ENCODE measurements at regions of chr2 and their contacts with region 1.

Region 1: DNA sequence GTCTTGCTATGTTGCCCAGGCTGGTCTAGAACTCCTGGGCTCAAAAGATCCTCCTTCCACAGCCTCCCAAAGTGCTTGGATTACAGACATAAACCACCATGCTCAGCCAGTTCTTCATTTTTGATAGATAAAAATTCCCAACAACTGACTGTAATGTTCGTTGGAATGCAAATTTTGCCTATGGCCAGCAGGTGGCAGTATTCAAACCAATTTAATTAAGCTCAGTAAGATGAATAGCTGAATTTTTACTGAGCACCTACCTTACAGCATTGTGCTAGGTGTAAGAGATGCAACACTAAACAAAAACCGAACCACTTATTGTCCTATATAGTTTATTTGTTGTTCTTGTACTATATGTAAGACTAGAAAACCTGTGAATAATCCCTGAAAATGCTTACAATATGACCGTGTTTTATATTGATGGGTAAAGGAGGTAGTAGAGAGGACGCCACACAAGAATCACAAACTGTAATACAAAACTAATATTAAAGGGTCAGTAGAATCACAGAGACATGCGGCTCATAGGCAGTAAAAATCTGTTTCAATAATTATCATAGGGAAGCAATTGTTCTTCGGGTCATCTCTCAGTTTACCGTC is 8.2 kb upstream of the TMEM182 start:
- DNase-seq: peak; percentile 25
- H3K4me3 Mint-ChIP-seq: no peak overlapping the region
- H3K27ac Mint-ChIP-seq: no peak overlapping the region
- H3K4me1 Mint-ChIP-seq: no peaks in the 10 kb centered on the region
- H3K27me3 Mint-ChIP-seq: no peaks in the 10 kb centered on the region
- CTCF ChIP-seq: peak; percentile 73

Region 2: DNA sequence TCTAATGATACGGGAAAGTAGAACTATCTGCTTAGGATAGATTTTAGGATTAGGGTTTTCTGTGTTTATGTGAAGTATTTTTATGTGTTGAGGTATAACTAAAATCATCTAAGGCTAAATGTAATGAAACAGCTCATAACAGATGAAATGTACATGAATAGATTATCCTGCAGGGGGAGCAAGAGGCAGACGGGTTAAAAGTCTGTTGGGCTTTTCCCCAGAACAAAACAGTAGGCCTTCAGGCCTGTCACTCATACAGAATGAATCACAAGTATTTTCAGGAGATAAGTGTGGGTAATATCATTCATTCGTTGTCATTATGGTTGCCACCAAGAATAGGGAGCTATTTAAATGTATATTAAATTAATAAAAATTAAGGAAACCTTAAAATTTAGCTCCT is 869.8 kb before region 1 on chr2:
- CTCF ChIA-PET with region 1: no interaction called
- intact Hi-C with region 1: no loop called
- DNase-seq: peak; percentile 28
- H3K4me3 Mint-ChIP-seq: no peak overlapping the region
- H3K27ac Mint-ChIP-seq: no peak overlapping the region
- H3K4me1 Mint-ChIP-seq: no peaks in the 10 kb centered on the region
- H3K27me3 Mint-ChIP-seq: no peaks in the 10 kb centered on the region
- CTCF ChIP-seq: peak; percentile 44

Region 3: DNA sequence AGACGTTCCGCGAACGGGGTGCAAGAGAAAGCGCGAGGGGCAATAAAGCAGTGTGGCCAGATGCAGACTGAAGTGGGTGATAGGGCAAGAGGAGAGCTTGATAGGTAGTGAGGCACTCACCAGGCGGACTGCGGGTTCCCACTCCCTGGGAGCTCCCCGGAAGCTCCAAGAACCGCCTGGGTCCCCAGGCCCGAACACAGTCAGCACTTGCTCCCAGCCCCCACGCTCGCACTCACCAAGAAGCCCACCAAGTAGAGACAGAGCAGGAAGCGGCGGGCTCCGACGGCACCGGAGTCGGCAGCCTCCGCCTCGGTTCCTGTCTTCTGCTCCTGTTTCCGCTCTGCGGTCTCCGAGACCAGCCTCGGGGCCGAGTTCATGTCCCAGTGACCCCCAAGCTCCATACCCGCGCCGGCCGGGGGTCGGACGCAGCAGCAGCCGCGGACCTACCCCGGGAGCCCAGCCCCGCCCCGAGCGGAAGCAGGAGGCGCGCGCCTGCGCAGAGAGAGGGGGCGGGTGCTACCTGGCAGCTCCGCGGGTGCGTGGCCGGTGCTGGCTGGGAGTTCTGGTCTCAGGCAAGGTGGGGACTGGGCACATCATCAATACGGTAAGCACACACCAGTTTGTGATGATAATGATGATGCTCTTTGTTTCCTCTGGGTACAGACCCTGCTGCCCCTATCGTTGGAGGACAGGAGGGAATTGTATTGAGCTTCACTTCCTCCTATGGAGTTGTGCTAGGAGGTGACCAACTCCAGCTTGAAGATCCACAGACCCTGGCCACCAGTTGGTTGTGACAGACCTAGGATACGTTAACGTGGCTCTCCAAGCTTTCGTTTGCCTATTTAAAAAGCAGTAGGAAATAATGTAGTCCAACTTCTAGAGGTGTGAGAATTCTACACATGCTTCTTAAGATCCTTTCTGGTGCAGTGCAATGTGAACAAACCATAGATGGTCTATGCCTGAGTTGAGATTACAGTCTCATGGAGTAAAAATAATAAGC is 17.0 kb before region 1 on chr2:
- CTCF ChIA-PET with region 1: interaction called, 11 read pairs
- intact Hi-C with region 1: no loop called
- DNase-seq: peak; percentile 89
- H3K4me3 Mint-ChIP-seq: peak overlapping the region; percentile 99
- H3K27ac Mint-ChIP-seq: peak overlapping the region; percentile 75
- H3K4me1 Mint-ChIP-seq: peaks cover 9% of the 10 kb centered on the region
- H3K27me3 Mint-ChIP-seq: no peaks in the 10 kb centered on the region
- CTCF ChIP-seq: no peak

Region 4: DNA sequence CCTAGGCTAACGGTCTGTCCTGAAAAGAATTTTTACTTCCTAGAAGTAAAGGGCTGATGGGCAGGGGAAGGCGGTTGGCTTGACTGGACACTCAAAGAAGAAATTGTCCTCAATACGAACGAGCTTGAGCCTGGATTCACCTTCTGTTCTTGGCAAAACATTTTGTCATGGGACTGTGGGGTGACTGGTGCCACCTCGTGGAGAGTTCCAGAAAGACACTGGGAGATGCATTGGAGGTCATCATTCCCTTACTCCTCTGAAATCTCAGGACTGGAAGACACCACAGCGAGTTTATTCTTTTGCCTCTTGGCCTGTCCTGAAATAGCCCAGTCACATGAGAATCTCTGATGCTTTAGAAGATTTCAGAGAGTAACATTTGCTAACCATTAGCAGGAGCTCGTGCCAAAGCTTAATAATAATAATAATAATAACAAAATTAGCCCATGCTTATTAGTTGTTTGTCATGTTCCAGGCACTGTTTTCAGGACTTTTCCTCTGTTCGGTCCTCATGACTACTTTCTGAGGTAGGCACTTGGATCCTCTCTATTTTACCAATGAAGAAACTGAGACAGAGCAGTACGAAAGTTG is 52.7 kb after region 1 on chr2:
- CTCF ChIA-PET with region 1: interaction called, 33 read pairs
- intact Hi-C with region 1: loop called (anchors 1 kb)
- DNase-seq: peak; percentile 68
- H3K4me3 Mint-ChIP-seq: no peak overlapping the region
- H3K27ac Mint-ChIP-seq: no peak overlapping the region
- H3K4me1 Mint-ChIP-seq: no peaks in the 10 kb centered on the region
- H3K27me3 Mint-ChIP-seq: no peaks in the 10 kb centered on the region
- CTCF ChIP-seq: peak; percentile 59

Measured in Calu3 (cell line).